Esophagus muscularis mucosa (tissue), 4 donors: ENCODE measurements at regions of chr22 and their contacts with region 1.

Region 1: GRCh38 chr22:36781656-36782627 is 6.0 kb upstream of the IFT27 start:
- DNase-seq: peak; percentile 95
- H3K4me3 ChIP-seq: no peak overlapping the region
- H3K27ac ChIP-seq: peak overlapping the region; percentile 36 to 69 (median 44)
- H3K4me1 ChIP-seq: peaks cover 4 to 14% (median 11%) of the 10 kb centered on the region in 4 donors
- H3K27me3 ChIP-seq: peaks cover 0 to 3% (median 0%) of the 10 kb centered on the region in 4 donors
- CTCF ChIP-seq: peak in 2 of 3 experiments; percentile 88 to 93
- EP300 ChIP-seq: no peak
- POLR2A ChIP-seq: no peak

Region 2: DNA sequence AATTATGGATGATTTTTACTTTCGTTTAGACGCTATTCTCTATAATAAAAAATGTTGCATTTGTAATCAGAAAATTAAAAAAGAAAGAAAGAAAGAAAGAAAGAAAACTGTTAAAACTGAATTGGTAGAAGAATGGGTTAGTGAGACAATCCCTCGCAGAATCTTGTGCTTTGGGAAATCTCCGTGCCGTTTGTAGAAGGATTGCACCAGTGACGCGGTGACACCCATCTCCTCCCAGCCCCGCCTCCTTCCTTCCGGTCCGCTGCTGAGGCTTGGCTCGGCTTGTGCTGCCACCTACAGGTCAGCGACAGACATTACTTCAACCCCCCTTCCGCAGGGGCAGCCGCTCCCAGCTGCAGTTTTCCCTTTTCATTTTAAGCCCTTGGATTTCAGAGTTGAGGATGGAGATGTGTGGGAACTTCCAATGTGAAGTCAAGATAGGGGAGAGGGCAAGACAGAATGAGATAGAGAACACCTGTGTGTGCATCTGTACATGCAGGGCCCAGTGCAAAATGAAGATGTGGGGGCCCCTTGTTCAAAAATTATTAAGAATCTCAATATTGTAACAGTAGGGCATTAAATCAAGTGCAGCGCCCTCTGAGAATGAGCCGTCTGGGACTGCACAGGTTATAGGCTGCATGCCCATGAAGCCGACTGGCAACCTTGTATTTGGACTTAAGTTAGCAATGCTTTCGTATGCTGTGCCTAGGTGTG is 196.2 kb after region 1 on chr22:
- intact Hi-C with region 1: loop called (anchors 2 kb)
- DNase-seq: peak; percentile 95
- H3K4me3 ChIP-seq: peak overlapping the region; percentile 46 to 52 (median 50)
- H3K27ac ChIP-seq: no peak overlapping the region
- H3K4me1 ChIP-seq: peaks cover 6 to 11% (median 8%) of the 10 kb centered on the region in 4 donors
- H3K27me3 ChIP-seq: peaks cover 0 to 23% (median 0%) of the 10 kb centered on the region in 4 donors
- CTCF ChIP-seq: peak; percentile 96 to 98 (median 98)
- EP300 ChIP-seq: no peak
- POLR2A ChIP-seq: no peak